CD4-positive, alpha-beta memory T cell (primary cell): ENCODE measurements at regions of chr1 and their contacts with region 1.

Region 1: GRCh38 chr1:89843281-89844121 is 22.7 kb downstream of the LRRC8D start:
- DNase-seq: peak; percentile 73 to 83 (median 79)
- H3K4me3 ChIP-seq: peak overlapping the region; percentile 87 to 89
- H3K4me3 Mint-ChIP-seq: peak overlapping the region; percentile 95 to 98 (median 97)
- H3K27ac ChIP-seq: peak overlapping the region; percentile 85
- H3K27ac Mint-ChIP-seq: peak overlapping the region; percentile 94 to 97 (median 97)
- H3K4me1 ChIP-seq: peaks cover 51% of the 10 kb centered on the region
- H3K4me1 Mint-ChIP-seq: peaks cover 30 to 81% (median 54%) of the 10 kb centered on the region in 4 donors
- H3K27me3 ChIP-seq: no peaks in the 10 kb centered on the region
- H3K27me3 Mint-ChIP-seq: no peaks in the 10 kb centered on the region

Region 2: DNA sequence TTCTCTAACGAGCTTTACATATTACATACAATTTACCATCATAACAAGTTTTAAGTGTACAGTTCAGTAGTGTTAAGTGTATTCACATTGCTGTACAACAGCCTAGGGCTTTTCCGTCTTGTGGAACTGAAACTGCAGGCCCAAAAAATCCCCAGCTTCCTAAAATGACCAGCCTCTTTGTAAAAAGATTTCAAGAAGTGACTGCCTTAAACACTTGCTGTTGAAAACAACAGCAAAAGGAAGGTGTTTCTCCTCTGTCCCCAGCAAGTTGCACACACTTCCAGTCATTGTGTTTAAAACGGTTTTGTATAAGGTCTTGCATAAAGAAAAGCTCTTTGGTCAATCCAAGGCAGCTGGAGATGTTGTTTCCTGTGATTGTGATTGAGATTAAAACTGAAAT is 762.5 kb before region 1 on chr1:
- CTCF ChIA-PET with region 1: no interaction called
- POLR2A ChIA-PET with region 1: no interaction called
- intact Hi-C with region 1: no loop called
- DNase-seq: no peak
- H3K4me3 ChIP-seq: no peak overlapping the region
- H3K4me3 Mint-ChIP-seq: no peak overlapping the region
- H3K27ac ChIP-seq: no peak overlapping the region
- H3K27ac Mint-ChIP-seq: no peak overlapping the region
- H3K4me1 ChIP-seq: no peaks in the 10 kb centered on the region
- H3K4me1 Mint-ChIP-seq: peaks cover 0 to 4% (median 2%) of the 10 kb centered on the region in 4 donors
- H3K27me3 ChIP-seq: no peaks in the 10 kb centered on the region
- H3K27me3 Mint-ChIP-seq: no peaks in the 10 kb centered on the region

Region 3: GRCh38 chr1:89605692-89606091 is 237.8 kb before region 1 on chr1:
- CTCF ChIA-PET with region 1: no interaction called
- POLR2A ChIA-PET with region 1: interaction called, 12 read pairs
- intact Hi-C with region 1: no loop called
- DNase-seq: no peak
- H3K4me3 ChIP-seq: peak overlapping the region in 1 of 2 donors; percentile 0
- H3K4me3 Mint-ChIP-seq: peak overlapping the region in 6 of 8 donors; percentile 29 to 97 (median 64)
- H3K27ac ChIP-seq: peak overlapping the region; percentile 84
- H3K27ac Mint-ChIP-seq: peak overlapping the region; percentile 98 to 100 (median 99)
- H3K4me1 ChIP-seq: peaks cover 95% of the 10 kb centered on the region
- H3K4me1 Mint-ChIP-seq: peaks cover 73 to 98% (median 87%) of the 10 kb centered on the region in 4 donors
- H3K27me3 ChIP-seq: no peaks in the 10 kb centered on the region
- H3K27me3 Mint-ChIP-seq: no peaks in the 10 kb centered on the region

Region 4: DNA sequence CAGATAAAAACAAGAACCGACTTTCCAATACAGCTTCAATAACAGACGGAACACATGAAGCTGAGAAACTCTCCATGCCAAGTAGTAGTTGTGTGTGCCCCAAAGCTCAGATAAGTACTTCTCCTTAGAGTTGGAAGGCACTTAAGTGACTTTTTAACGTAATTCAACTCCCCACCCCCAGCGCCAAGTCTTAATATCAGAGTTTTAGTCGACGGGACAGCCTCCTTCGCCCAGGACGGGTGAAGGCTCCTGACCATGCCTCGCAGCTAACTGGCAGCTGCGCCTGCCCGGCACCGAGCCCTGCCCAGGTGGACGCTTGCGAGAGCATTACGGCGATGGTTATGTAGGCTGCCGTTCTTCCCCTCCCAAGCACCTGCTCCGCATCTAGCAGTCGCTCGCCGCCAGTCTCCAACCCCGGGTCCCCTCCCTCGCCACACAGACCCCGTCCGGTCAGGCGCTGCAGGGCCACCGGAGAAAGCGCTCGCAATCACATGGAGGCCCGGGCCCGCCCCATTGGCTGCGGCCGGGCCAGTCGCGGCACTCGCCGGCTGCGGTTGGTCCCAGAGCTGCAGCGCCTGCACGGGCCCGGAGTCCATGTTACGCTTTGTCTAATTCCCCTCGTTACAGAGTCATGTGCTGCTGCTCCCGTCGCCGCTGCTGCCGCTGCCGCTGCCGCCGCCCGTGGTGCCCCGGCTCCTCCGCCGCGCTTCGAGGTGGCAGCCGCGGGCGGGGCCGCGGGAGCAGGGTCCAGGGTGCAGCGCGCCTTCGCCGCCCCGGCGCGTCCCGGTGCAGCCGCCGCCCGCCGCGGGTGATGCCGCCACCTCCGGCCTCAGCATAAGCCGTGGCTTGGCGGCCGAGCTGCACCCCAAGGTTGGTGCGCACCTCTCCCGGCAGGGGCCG is 22.8 kb before region 1 on chr1 and contains the start of gene LRRC8D:
- CTCF ChIA-PET with region 1: interaction called, 26 read pairs
- POLR2A ChIA-PET with region 1: interaction called, 71 read pairs
- intact Hi-C with region 1: loop called (anchors 1 kb)
- DNase-seq: peak; percentile 54 to 78 (median 63)
- H3K4me3 ChIP-seq: peak within 1 kb of the TSS; percentile 44 to 60
- H3K4me3 Mint-ChIP-seq: peak within 1 kb of the TSS; percentile 87 to 92 (median 90)
- H3K27ac ChIP-seq: peak within 1 kb of the TSS; percentile 65
- H3K27ac Mint-ChIP-seq: peak within 1 kb of the TSS; percentile 85 to 92 (median 88)
- H3K4me1 ChIP-seq: peaks cover 11% of the 10 kb centered on the region
- H3K4me1 Mint-ChIP-seq: peaks cover 23 to 32% (median 25%) of the 10 kb centered on the region in 4 donors
- H3K27me3 ChIP-seq: no peaks in the 10 kb centered on the region
- H3K27me3 Mint-ChIP-seq: no peaks in the 10 kb centered on the region
- total RNA-seq, gene LRRC8D: 56.8 to 63.2 TPM

Region 5: GRCh38 chr1:89865498-89866385 is 22.2 kb after region 1 on chr1:
- CTCF ChIA-PET with region 1: interaction called, 11 read pairs
- POLR2A ChIA-PET with region 1: interaction called, 25 read pairs
- intact Hi-C with region 1: loop called (anchors 2 kb)
- DNase-seq: no peak
- H3K4me3 ChIP-seq: no peak overlapping the region
- H3K4me3 Mint-ChIP-seq: peak overlapping the region in 2 of 8 donors; percentile 32 to 44
- H3K27ac ChIP-seq: no peak overlapping the region
- H3K27ac Mint-ChIP-seq: peak overlapping the region in 5 of 7 donors; percentile 6 to 74 (median 35)
- H3K4me1 ChIP-seq: peaks cover 55% of the 10 kb centered on the region
- H3K4me1 Mint-ChIP-seq: peaks cover 61 to 88% (median 71%) of the 10 kb centered on the region in 4 donors
- H3K27me3 ChIP-seq: no peaks in the 10 kb centered on the region
- H3K27me3 Mint-ChIP-seq: no peaks in the 10 kb centered on the region

Region 6: GRCh38 chr1:89876463-89876862 is 33.0 kb after region 1 on chr1:
- CTCF ChIA-PET with region 1: interaction called, 14 read pairs
- POLR2A ChIA-PET with region 1: interaction called, 25 read pairs
- intact Hi-C with region 1: loop called (anchors 2 kb)
- DNase-seq: no peak
- H3K4me3 ChIP-seq: no peak overlapping the region
- H3K4me3 Mint-ChIP-seq: no peak overlapping the region
- H3K27ac ChIP-seq: no peak overlapping the region
- H3K27ac Mint-ChIP-seq: peak overlapping the region in 3 of 7 donors; percentile 19 to 77 (median 72)
- H3K4me1 ChIP-seq: peaks cover 40% of the 10 kb centered on the region
- H3K4me1 Mint-ChIP-seq: peaks cover 26 to 61% (median 45%) of the 10 kb centered on the region in 4 donors
- H3K27me3 ChIP-seq: no peaks in the 10 kb centered on the region
- H3K27me3 Mint-ChIP-seq: no peaks in the 10 kb centered on the region

Region 7: DNA sequence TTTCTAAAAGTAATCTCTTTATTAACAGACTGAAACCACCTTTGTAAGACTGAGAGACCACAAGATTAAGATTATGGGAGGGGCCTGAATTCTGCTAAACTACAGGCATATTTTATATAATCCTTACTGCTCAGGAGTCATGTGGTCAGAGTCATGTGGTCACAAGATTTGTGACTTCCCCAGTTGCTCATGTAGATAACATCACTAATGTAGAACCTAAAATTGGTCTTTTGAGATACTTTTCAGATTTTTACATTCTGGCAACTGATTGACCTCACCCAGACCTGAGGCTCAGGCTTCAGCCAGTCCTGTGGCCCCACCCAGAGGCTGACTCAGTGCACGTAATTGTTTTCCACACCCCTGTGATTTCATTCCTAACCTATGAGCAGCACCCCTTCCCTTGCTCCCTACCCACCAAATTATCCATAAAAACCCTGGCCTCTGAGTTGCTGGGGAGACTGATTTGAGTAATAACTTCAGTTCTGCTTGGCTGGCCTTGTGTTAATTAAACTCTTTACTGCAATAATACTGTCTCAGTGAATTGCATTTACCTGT is 109.6 kb after region 1 on chr1:
- CTCF ChIA-PET with region 1: interaction called, 3 read pairs
- POLR2A ChIA-PET with region 1: interaction called, 5 read pairs
- intact Hi-C with region 1: loop called (anchors 10 kb)
- DNase-seq: peak in 3 of 5 donors; percentile 15 to 21 (median 17)
- H3K4me3 ChIP-seq: no peak overlapping the region
- H3K4me3 Mint-ChIP-seq: no peak overlapping the region
- H3K27ac ChIP-seq: no peak overlapping the region
- H3K27ac Mint-ChIP-seq: no peak overlapping the region
- H3K4me1 ChIP-seq: peaks cover 12% of the 10 kb centered on the region
- H3K4me1 Mint-ChIP-seq: peaks cover 16 to 20% (median 17%) of the 10 kb centered on the region in 4 donors
- H3K27me3 ChIP-seq: no peaks in the 10 kb centered on the region
- H3K27me3 Mint-ChIP-seq: peaks cover 0 to 2% of the 10 kb centered on the region in 2 donors

Region 8: GRCh38 chr1:89987170-89987819 is 143.8 kb after region 1 on chr1:
- CTCF ChIA-PET with region 1: interaction called, 35 read pairs
- POLR2A ChIA-PET with region 1: no interaction called
- intact Hi-C with region 1: loop called (anchors 1 kb)
- DNase-seq: peak; percentile 66 to 70 (median 68)
- H3K4me3 ChIP-seq: no peak overlapping the region
- H3K4me3 Mint-ChIP-seq: no peak overlapping the region
- H3K27ac ChIP-seq: no peak overlapping the region
- H3K27ac Mint-ChIP-seq: no peak overlapping the region
- H3K4me1 ChIP-seq: no peaks in the 10 kb centered on the region
- H3K4me1 Mint-ChIP-seq: no peaks in the 10 kb centered on the region
- H3K27me3 ChIP-seq: no peaks in the 10 kb centered on the region
- H3K27me3 Mint-ChIP-seq: peaks cover 0 to 1% of the 10 kb centered on the region in 2 donors